IMR-90 (cell line): ENCODE measurements at regions of chr1 and their contacts with region 1.

Region 1: DNA sequence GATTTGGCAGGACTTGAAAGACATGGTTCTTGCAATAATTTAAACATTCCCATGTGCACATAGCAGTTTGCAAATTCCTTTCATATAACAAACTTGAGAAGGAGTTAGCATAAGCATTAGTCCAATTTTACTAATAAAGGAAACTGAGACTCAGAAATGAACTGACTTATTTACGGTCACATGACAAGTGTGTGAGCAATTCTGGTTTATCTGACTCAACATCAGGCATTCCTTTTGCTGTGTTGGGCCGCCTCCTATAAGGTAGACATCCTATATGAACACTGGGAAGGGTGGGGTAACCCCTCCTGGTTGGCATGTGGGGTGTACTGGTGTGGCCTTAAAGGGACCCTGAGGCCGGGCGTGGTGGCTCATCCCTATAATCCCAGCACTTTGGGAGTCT is 8.5 kb upstream of the CPT2 start:
- DNase-seq: peak; percentile 55
- ATAC-seq: 0 out of 2 replicates have a peak, but pooled peaks have one; percentile 2
- H3K4me3 ChIP-seq: no peak overlapping the region
- H3K27ac ChIP-seq: peak overlapping the region; percentile 20; the same call in 1 of the 2 replicates
- H3K4me1 ChIP-seq: peaks cover 33% of the 10 kb centered on the region
- H3K27me3 ChIP-seq: no peaks in the 10 kb centered on the region
- CTCF ChIP-seq: no peak
- POLR2A ChIP-seq: no peak
- RAD21 ChIP-seq: no peak

Region 2: DNA sequence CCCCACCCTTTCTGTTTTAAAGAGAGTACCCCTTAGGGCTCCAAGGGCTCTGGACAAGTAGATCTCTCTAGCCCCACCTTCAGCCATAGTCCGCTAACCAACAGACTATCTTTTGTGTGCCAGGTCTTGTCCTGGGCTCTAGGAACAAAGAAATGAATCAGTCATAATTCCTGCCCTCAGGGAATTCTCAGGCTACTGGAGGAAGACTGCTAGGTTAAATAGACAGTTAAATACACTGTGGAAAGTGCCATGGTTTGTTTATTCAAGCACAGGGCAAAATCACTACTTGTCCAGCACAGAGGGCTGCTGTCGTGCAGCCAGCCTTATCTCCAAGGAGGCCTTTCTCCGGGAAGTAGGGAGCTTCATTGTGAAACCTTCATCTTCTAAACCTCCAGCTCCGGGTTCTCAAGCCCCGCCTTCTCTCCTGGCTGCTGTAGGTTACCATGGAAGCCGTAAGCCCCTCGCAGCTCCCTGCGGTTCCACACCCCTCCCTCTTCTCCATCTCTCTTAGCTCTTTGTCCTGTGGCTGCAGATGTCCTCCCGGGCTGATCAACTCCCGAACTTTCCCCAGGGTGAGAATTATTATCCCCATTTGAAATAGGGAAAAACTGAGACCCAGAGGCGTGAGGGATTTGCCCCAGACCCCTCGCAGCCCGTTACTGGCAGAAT is 525.3 kb before region 1 on chr1:
- CTCF ChIA-PET with region 1: no interaction called
- POLR2A ChIA-PET with region 1: no interaction called
- dilution Hi-C with region 1: no loop called
- in situ Hi-C with region 1: no loop called
- intact Hi-C with region 1: no loop called
- DNase-seq: peak; percentile 52
- ATAC-seq: peak; percentile 90
- H3K4me3 ChIP-seq: no peak overlapping the region
- H3K27ac ChIP-seq: no peak overlapping the region
- H3K4me1 ChIP-seq: peaks cover 8% of the 10 kb centered on the region; the same call in 1 of the 2 replicates
- H3K27me3 ChIP-seq: peaks cover 7% of the 10 kb centered on the region; the same call in 1 of the 2 replicates
- CTCF ChIP-seq: no peak
- POLR2A ChIP-seq: no peak
- RAD21 ChIP-seq: no peak

Region 3: GRCh38 chr1:52842643-52843309 is 345.3 kb before region 1 on chr1 and contains the start of gene ZYG11A:
- CTCF ChIA-PET with region 1: no interaction called
- POLR2A ChIA-PET with region 1: no interaction called
- dilution Hi-C with region 1: no loop called
- in situ Hi-C with region 1: no loop called
- intact Hi-C with region 1: loop called (anchors 5 kb)
- DNase-seq: peak; percentile 77
- ATAC-seq: peak; percentile 99
- H3K4me3 ChIP-seq: peak within 1 kb of the TSS; percentile 40
- H3K27ac ChIP-seq: no peak within 1 kb of the TSS
- H3K4me1 ChIP-seq: no peaks in the 10 kb centered on the region
- H3K27me3 ChIP-seq: no peaks in the 10 kb centered on the region
- CTCF ChIP-seq: peak; percentile 44
- POLR2A ChIP-seq: no peak
- RAD21 ChIP-seq: no peak
- total RNA-seq, gene ZYG11A: 1.9 and 2.0 TPM in 2 replicates

Region 4: DNA sequence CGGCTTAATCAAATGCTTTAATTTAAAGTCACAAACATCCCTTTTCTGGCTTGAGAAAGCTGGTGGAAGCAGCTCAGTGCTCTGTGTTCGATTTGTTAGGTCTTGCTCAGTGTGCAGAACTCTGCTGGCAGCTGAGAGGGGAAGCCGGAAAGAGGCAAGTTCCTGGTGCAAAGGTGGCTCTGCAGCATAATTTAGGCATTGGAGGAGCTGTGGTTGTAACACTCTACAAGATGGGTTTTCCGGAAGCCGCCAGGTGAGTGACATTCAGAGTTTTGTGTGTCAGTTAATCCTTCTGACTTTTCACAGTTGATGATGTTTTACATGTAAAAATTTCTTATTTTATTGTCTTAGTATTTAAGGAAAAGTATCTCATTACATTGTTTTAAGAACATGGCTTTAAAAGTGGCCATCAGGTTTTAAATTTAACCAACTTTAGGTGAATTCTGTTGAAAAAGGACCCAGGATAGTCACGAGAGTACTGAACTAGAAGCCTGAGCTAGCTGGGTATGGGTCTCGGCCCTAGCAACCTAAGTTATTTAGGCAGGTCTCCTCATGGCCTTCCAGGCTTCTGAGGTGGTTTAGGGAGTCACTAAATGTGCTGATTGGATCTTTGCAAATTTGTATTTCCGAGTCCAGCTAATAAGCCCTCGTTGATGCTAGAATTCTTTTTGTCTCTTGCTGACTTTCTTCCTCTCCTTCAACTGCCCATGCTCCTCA is 173.2 kb before region 1 on chr1:
- CTCF ChIA-PET with region 1: no interaction called
- POLR2A ChIA-PET with region 1: no interaction called
- dilution Hi-C with region 1: no loop called
- in situ Hi-C with region 1: no loop called
- intact Hi-C with region 1: loop called (anchors 5 kb)
- DNase-seq: peak; percentile 91
- ATAC-seq: peak; percentile 95
- H3K4me3 ChIP-seq: peak overlapping the region; percentile 51
- H3K27ac ChIP-seq: peak overlapping the region; percentile 21
- H3K4me1 ChIP-seq: no peaks in the 10 kb centered on the region
- H3K27me3 ChIP-seq: no peaks in the 10 kb centered on the region
- CTCF ChIP-seq: no peak
- POLR2A ChIP-seq: no peak
- RAD21 ChIP-seq: peak; percentile 37

Region 5: GRCh38 chr1:53390261-53390660 is 202.2 kb after region 1 on chr1:
- CTCF ChIA-PET with region 1: no interaction called
- POLR2A ChIA-PET with region 1: no interaction called
- dilution Hi-C with region 1: no loop called
- in situ Hi-C with region 1: no loop called
- intact Hi-C with region 1: no loop called
- DNase-seq: no peak
- ATAC-seq: no peak
- H3K4me3 ChIP-seq: no peak overlapping the region
- H3K27ac ChIP-seq: no peak overlapping the region
- H3K4me1 ChIP-seq: no peaks in the 10 kb centered on the region
- H3K27me3 ChIP-seq: peaks cover 23% of the 10 kb centered on the region
- CTCF ChIP-seq: no peak
- POLR2A ChIP-seq: no peak
- RAD21 ChIP-seq: no peak